Heart right ventricle (tissue), 16 donors: ENCODE measurements at regions of chr10 and their contacts with region 1.

Region 1: DNA sequence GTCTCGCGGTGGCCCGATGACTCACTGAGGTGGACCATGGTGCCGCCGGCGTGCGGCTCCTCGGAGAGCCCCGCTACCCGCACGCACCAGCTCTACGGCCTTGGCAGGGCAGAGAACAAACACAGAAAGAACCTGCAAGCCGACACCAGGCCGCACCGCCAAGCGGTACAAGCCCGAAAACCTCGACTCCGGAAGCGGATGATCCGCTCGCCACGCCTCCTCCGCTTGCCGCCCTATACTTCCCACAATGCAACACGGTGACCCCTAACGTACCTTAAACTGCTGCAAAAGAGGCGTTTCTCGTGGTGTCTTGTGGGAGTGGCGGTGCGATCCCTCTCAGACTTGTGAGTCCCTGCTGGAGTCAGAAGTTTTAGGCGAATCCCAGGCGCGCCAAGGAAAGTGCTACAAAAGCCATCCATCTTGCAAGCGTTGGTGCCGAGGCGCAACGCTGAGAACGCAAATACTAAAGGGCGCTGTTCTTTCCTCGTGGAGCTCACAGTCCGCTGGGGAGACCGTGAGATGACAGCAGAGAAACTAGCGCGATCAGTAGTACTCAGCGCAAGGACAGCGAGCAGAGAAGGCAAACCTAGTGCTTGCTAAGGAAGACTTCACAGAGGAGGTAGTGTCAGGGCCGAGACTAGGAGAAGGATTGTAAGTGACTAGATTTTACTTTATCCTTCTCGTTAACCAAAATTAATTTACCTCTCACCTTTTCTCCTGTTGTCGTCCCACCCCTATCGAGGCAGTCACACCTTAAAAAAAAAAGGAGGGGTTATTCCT is at the start of gene MRPS16:
- DNase-seq: peak; percentile 87 to 97
- ATAC-seq: peak; percentile 95 to 99 (median 98)
- H3K4me3 ChIP-seq: peak within 1 kb of the TSS; percentile 69 to 96 (median 84)
- H3K27ac ChIP-seq: peak within 1 kb of the TSS; percentile 49 to 96 (median 90)
- H3K4me1 ChIP-seq: peaks cover 7 to 36% (median 30%) of the 10 kb centered on the region in 9 donors
- H3K27me3 ChIP-seq: no peaks in the 10 kb centered on the region
- CTCF ChIP-seq: no peak
- total RNA-seq, gene MRPS16: 95.5 to 115 (median 106) TPM

Region 2: GRCh38 chr10:73358331-73359279 is 106.0 kb after region 1 on chr10 and contains the start of gene CFAP70:
- intact Hi-C with region 1: loop called in 1 of 10 experiments (anchors 5 kb)
- DNase-seq: peak; percentile 90 to 93
- ATAC-seq: peak; percentile 93 to 98 (median 97)
- H3K4me3 ChIP-seq: peak within 1 kb of the TSS; percentile 62 to 84 (median 76)
- H3K27ac ChIP-seq: peak within 1 kb of the TSS; percentile 15 to 81 (median 62)
- H3K4me1 ChIP-seq: peaks cover 0 to 18% (median 11%) of the 10 kb centered on the region in 9 donors
- H3K27me3 ChIP-seq: no peaks in the 10 kb centered on the region
- CTCF ChIP-seq: no peak
- total RNA-seq, gene CFAP70: 0.87 to 3.9 (median 1.9) TPM

Region 3: DNA sequence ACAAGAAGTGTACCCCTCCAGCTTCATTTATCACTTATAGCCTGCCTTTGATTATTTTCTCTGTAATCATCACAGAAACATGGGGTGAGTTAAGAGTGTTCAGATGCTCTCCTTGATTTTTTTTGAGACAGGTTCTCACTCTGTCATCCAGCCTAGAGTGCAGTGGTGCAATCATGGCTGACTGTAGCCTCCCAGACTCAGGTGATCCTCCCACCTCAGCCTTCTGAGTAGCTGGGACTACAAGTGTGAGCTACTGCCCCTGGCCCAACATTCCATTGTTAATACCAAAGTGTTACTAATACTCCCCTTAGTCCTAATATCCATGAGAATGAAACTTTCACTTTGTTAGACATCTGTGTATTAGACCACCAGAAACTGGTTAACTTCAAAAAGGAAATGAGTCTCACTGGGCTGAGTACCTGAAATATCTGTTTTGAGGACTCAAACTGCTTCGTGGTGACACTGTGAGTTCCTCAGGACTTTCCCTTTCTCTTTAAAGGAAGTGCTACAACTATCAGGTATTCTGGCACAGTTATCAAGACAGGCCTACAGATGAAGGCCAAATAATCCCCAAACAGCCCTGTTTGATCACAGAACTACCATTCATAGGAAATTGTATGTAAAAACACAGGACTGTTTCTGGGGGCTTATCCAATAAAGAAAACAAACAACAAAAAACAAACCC is 126.6 kb after region 1 on chr10:
- intact Hi-C with region 1: no loop called
- DNase-seq: no peak
- ATAC-seq: no peak
- H3K4me3 ChIP-seq: no peak overlapping the region
- H3K27ac ChIP-seq: no peak overlapping the region
- H3K4me1 ChIP-seq: peaks cover 0 to 6% (median 0%) of the 10 kb centered on the region in 9 donors
- H3K27me3 ChIP-seq: no peaks in the 10 kb centered on the region
- CTCF ChIP-seq: no peak

Region 4: GRCh38 chr10:73601486-73601921 is 348.9 kb after region 1 on chr10:
- intact Hi-C with region 1: no loop called
- DNase-seq: no peak
- ATAC-seq: no peak
- H3K4me3 ChIP-seq: no peak overlapping the region
- H3K27ac ChIP-seq: no peak overlapping the region
- H3K4me1 ChIP-seq: no peaks in the 10 kb centered on the region
- H3K27me3 ChIP-seq: no peaks in the 10 kb centered on the region
- CTCF ChIP-seq: no peak